ENCODE measurements at regions of chr22 and their contacts with region 1.

Region 1: DNA sequence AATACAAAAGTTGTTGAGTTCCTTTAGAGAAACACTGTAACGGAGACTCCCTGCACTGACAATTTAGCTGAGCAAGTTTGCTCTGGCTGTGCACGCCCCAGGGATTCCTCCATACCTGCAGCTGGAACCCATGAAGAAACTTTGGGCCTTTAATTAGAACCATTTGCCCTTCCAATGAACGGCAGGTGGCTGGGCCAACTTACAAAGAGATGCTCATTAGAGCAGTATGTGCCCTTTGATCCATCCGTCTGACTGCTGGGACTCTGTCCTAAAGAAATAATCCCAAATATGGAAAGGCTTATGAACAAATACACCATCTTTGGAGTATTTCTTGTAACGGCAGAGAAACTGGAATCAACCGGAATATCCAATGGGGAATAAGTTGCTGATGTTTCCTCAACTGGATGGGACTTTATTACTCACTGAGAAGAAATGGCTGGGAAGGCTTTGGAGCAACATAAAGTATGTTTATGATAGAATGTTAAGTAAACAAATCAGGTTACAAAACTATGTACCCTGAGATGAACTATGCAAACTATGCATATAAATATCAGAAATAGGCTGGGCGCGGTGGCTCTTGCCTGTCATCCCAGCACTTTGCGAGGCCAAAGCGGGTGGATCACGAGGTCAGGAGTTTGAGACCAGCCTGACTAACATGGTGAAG is 24.4 kb upstream of the FBLN1 start:
- DNase-seq: no peak
- H3K4me3 ChIP-seq: no peak overlapping the region
- H3K27ac ChIP-seq: no peak overlapping the region
- H3K4me1 ChIP-seq: no peaks in the 10 kb centered on the region
- H3K27me3 ChIP-seq: no peaks in the 10 kb centered on the region
- CTCF ChIP-seq: no peak

Region 2: DNA sequence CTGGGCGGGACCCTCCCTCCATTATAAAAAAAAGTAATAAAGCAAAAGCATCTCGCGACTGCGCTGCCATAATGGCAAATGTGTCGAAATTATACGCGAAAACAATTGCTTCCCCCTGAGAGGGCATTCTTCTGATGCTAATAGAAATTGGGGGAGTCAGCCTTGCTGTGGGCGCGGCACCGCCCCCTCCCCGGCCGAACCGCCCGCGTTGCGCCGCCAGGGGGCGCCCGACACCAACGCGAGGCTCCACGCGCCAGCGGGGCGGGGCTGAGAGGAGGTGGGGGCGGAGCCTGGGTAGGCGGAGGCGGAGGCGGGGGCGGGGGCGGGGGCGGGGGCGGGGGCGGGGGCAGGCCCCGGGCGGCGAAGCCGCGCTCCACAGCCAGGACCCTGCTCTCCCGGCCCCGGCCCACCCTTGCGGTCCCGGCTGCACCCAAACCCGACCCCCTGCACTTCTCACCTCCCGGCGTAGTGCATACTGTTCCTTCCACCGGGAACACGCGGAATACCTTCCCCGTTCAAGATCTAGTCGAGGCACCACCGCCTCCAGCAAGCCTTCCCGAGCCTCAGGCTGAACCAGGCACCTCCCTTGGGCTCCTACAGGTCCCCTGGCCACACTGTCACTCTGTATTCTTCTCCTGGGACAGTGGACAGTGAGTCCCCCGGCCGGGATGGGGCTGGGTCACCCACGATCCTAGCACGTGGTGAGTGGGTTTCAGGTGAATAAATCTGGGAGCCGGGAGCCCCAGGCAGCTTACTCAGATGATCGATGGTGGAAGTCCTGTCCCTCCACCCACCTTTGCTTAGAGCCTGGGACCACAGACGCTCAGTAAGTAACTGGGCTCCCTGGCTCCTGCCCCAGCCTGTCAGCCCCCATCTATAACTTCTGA is 209.0 kb before region 1 on chr22:
- CTCF ChIA-PET with region 1: no interaction called
- dilution Hi-C with region 1: no loop called
- in situ Hi-C with region 1: no loop called
- intact Hi-C with region 1: no loop called
- DNase-seq: peak; percentile 43
- H3K4me3 ChIP-seq: peak overlapping the region; percentile 67 to 82 (median 68)
- H3K27ac ChIP-seq: no peak overlapping the region
- H3K4me1 ChIP-seq: peaks cover 10% of the 10 kb centered on the region
- H3K27me3 ChIP-seq: no peaks in the 10 kb centered on the region
- CTCF ChIP-seq: peak; percentile 63 to 81

Region 3: GRCh38 chr22:45462034-45462690 is 16.1 kb before region 1 on chr22:
- CTCF ChIA-PET with region 1: interaction called, 21 read pairs
- dilution Hi-C with region 1: no loop called
- in situ Hi-C with region 1: no loop called
- intact Hi-C with region 1: no loop called
- DNase-seq: no peak
- H3K4me3 ChIP-seq: no peak overlapping the region
- H3K27ac ChIP-seq: no peak overlapping the region
- H3K4me1 ChIP-seq: no peaks in the 10 kb centered on the region
- H3K27me3 ChIP-seq: no peaks in the 10 kb centered on the region
- CTCF ChIP-seq: no peak

Region 4: GRCh38 chr22:45511847-45512281 is 33.6 kb after region 1 on chr22:
- CTCF ChIA-PET with region 1: no interaction called
- dilution Hi-C with region 1: loop called (anchors 5 kb)
- in situ Hi-C with region 1: no loop called
- intact Hi-C with region 1: no loop called
- DNase-seq: no peak
- H3K4me3 ChIP-seq: no peak overlapping the region
- H3K27ac ChIP-seq: no peak overlapping the region
- H3K4me1 ChIP-seq: peaks cover 12% of the 10 kb centered on the region
- H3K27me3 ChIP-seq: no peaks in the 10 kb centered on the region
- CTCF ChIP-seq: no peak